Right ventricle myocardium inferior (tissue), 1 donor: ENCODE measurements at regions of chr3 and their contacts with region 1.

Region 1: DNA sequence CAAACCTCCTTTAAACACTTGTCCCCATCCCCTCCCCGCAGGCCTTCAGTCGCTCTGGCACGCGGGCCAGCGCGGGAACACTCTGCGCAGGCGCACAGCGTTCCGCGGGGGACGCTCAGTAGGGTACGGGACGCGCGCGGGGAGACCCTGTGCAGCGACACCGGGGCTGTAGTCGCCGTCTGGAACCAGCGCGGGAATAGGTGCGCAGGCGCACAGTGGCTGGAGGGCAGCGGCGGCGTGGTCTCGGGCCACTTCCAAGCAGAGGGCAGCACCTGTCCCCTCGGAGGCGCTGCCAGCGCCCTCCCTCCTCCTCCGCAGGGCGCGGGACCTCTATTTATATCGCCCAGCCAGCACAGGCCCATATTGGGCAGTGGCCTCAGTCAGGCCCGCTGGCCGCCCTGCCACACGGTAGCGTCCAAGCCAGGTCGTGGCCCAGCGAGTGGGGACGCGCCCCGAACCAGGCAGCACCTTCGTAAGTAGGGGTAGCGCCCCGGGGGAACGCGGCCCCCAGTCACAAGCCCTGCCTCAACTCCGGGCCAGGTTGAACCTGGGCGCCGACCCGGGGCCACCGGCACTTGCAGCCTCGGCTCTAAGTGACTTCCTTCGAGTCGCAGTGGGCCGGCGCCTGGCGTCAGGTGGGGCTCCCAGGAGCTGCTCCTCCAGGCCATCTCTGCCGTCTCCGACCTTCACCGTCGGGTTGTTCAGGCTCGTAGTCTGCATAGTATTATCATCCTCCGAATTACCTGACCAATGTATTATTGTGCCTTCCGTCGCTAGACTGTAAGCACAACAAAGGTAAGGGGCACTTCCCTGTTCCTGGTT is at the start of gene KBTBD12:
- DNase-seq: peak; percentile 81
- ATAC-seq: peak; percentile 83
- total RNA-seq, gene KBTBD12: 29.7 TPM

Region 2: GRCh38 chr3:127590593-127591477 is 324.5 kb before region 1 on chr3 and contains the start of gene TPRA1:
- intact Hi-C with region 1: no loop called
- DNase-seq: peak; percentile 96
- ATAC-seq: peak; percentile 94
- total RNA-seq, gene TPRA1: 21.3 TPM

Region 3: GRCh38 chr3:128051837-128052594 is 136.7 kb after region 1 on chr3 and contains the start of gene SEC61A1:
- intact Hi-C with region 1: loop called (anchors 5 kb)
- DNase-seq: peak; percentile 97
- ATAC-seq: peak; percentile 98
- total RNA-seq, gene SEC61A1: 57.5 TPM